ENCODE measurements at regions of chr4 and their contacts with region 1.

Region 1: DNA sequence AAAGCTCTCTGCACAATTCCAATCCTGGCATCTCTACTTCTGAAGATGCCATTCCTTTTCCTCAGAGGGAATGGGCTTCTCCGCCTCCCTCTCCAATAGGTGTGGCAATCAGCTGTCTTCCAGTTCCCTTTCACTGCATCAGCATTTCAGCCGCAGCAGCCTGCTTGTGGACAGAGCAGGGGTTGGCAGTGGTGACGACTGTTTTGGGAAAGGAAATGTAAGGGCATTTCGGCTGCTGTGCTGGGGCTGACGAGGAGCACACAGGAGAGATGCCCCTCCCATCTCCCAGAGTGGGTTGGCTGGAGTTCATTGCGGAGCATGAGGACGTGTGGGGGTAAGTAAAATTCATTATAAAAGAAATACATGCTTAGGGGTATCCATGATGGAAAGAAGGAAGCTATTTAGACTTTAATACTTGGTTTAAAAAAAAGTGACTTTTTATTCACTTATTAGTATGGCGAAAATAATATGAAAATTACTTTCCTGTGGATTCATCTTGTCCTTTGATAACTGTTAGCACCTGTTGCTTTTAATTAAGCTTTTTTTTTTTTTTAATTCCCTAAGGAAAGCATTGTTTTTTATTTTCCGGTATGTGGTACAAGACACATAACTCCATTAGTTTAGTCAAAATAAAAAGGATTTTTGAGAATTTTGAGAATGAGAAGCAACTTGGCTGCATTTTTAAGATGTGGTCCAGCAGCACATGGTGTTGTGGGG is at the start of gene LIMCH1:
- DNase-seq: peak; percentile 79 to 90 (median 85)
- ATAC-seq: peak; percentile 85 to 88
- H3K4me3 ChIP-seq: peak within 1 kb of the TSS; percentile 63
- H3K27ac ChIP-seq: peak within 1 kb of the TSS; percentile 87
- H3K4me1 ChIP-seq: peaks cover 24% of the 10 kb centered on the region
- H3K27me3 ChIP-seq: no peaks in the 10 kb centered on the region
- total RNA-seq, gene LIMCH1: 157 to 248 (median 198) TPM

Region 2: GRCh38 chr4:41432881-41433280 is 105.3 kb before region 1 on chr4:
- intact Hi-C with region 1: loop called in 2 of 4 experiments (anchors 10 kb)
- DNase-seq: no peak
- ATAC-seq: no peak
- H3K4me3 ChIP-seq: no peak overlapping the region
- H3K27ac ChIP-seq: no peak overlapping the region
- H3K4me1 ChIP-seq: peaks cover 21% of the 10 kb centered on the region
- H3K27me3 ChIP-seq: no peaks in the 10 kb centered on the region

Measured in right cardiac atrium (tissue), 5 donors.